CD4-positive, alpha-beta memory T cell (primary cell): ENCODE measurements at regions of chr7 and their contacts with region 1.

Region 1: GRCh38 chr7:151017953-151018420 is 6.3 kb downstream of the ATG9B start:
- DNase-seq: peak; percentile 72 to 81 (median 73)
- H3K4me3 ChIP-seq: peak overlapping the region; percentile 28 to 68
- H3K4me3 Mint-ChIP-seq: peak overlapping the region; percentile 81 to 94 (median 85)
- H3K27ac ChIP-seq: no peak overlapping the region
- H3K27ac Mint-ChIP-seq: peak overlapping the region; percentile 77 to 97 (median 93)
- H3K4me1 ChIP-seq: peaks cover 60% of the 10 kb centered on the region
- H3K4me1 Mint-ChIP-seq: peaks cover 38 to 65% (median 51%) of the 10 kb centered on the region in 4 donors
- H3K27me3 ChIP-seq: no peaks in the 10 kb centered on the region
- H3K27me3 Mint-ChIP-seq: peaks cover 1 to 9% of the 10 kb centered on the region in 2 donors

Region 2: DNA sequence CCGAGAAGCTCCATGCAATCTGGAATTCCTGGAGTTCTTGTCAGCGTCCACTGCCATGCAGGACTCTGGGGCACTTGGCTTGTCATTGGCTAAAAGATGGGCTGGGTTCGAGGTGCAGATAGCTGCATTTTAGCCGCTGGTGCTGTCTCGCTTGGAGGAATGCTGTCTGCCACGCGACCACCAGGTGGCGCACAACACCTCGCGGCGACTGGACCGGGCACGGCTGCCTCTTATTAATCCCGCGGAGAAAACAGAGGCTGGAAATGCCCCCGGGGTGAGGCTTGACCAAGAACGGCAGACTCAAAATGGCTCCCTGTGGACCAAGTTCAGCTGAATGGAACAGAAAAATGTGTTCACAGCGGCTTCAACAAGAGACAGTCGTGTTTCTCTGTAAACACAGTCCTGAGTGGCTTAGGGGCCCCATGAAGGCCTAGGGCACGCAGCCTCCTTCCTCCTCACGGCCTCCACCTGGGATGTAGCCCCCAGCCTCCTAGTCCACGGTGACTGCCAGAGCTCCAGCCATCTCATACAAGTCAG is 119.4 kb before region 1 on chr7:
- CTCF ChIA-PET with region 1: interaction called, 23 read pairs
- POLR2A ChIA-PET with region 1: interaction called, 3 read pairs
- intact Hi-C with region 1: loop called (anchors 1 kb)
- DNase-seq: peak; percentile 62 to 74 (median 65)
- H3K4me3 ChIP-seq: no peak overlapping the region
- H3K4me3 Mint-ChIP-seq: peak overlapping the region in 4 of 8 donors; percentile 1 to 40 (median 20)
- H3K27ac ChIP-seq: no peak overlapping the region
- H3K27ac Mint-ChIP-seq: peak overlapping the region in 2 of 7 donors; percentile 8 to 44
- H3K4me1 ChIP-seq: peaks cover 11% of the 10 kb centered on the region
- H3K4me1 Mint-ChIP-seq: peaks cover 3 to 8% (median 7%) of the 10 kb centered on the region in 4 donors
- H3K27me3 ChIP-seq: peaks cover 13% of the 10 kb centered on the region
- H3K27me3 Mint-ChIP-seq: peaks cover 23 to 38% of the 10 kb centered on the region in 2 donors

Region 3: GRCh38 chr7:150962553-150963399 is 55.2 kb before region 1 on chr7:
- CTCF ChIA-PET with region 1: interaction called, 66 read pairs
- POLR2A ChIA-PET with region 1: interaction called, 10 read pairs
- intact Hi-C with region 1: loop called (anchors 1 kb)
- DNase-seq: peak in 4 of 5 donors; percentile 58 to 63 (median 62)
- H3K4me3 ChIP-seq: no peak overlapping the region
- H3K4me3 Mint-ChIP-seq: no peak overlapping the region
- H3K27ac ChIP-seq: no peak overlapping the region
- H3K27ac Mint-ChIP-seq: no peak overlapping the region
- H3K4me1 ChIP-seq: peaks cover 21% of the 10 kb centered on the region
- H3K4me1 Mint-ChIP-seq: peaks cover 6 to 15% (median 9%) of the 10 kb centered on the region in 4 donors
- H3K27me3 ChIP-seq: no peaks in the 10 kb centered on the region
- H3K27me3 Mint-ChIP-seq: peaks cover 12 to 13% of the 10 kb centered on the region in 2 donors

Region 4: DNA sequence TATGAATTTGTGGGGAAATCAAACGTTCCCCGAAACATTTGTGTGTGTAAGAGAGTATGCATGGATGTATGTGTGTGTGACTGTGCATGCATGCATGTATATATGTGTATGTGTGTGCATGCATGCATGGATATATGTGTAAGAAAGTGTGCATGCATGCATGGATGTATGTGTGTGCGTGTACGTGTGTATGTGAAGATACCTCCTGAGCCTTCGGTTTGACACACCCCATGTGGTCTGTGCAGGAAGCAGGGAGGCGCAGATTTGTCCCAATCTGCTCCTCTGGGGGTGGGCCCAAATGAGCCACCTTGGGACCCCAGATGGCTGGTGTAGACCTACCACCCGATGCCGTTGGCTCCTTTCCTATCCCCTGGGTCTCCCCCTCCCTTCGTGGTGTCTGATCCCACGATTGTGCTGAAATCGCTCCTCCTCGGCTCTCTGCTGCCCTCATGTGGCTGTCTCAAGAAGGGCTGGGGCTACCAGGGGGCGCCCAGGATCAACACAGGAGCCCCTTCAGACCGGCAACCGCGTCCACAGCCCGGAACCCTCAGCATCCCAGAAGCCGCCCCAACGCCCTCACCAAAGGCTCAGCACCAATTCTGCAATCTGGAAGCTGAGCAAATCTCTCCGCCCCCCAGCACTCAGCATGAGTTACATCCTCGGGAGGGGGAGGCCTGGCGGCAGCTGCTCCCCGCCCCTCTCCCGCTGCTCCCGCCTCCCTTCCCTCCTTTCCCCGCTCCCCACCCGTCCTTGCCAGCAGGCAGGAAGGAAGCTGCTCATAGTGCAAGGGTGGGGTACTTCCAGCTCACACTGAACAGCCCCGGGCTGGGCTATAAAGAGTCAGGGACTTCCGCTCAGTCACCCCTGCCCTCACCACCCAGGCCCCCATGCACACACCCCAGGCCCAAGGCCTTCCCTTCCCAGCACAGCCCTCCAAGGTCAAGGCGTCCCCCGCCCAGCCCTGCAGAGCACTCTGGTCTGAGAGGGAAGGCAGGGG is 29.5 kb before region 1 on chr7:
- CTCF ChIA-PET with region 1: interaction called, 98 read pairs
- POLR2A ChIA-PET with region 1: interaction called, 12 read pairs
- intact Hi-C with region 1: loop called (anchors 1 kb)
- DNase-seq: peak; percentile 53 to 72 (median 70)
- H3K4me3 ChIP-seq: peak overlapping the region in 1 of 2 donors; percentile 47
- H3K4me3 Mint-ChIP-seq: peak overlapping the region; percentile 55 to 85 (median 75)
- H3K27ac ChIP-seq: no peak overlapping the region
- H3K27ac Mint-ChIP-seq: peak overlapping the region; percentile 23 to 95 (median 83)
- H3K4me1 ChIP-seq: peaks cover 35% of the 10 kb centered on the region
- H3K4me1 Mint-ChIP-seq: peaks cover 18 to 50% (median 31%) of the 10 kb centered on the region in 4 donors
- H3K27me3 ChIP-seq: no peaks in the 10 kb centered on the region
- H3K27me3 Mint-ChIP-seq: no peaks in the 10 kb centered on the region

Region 5: DNA sequence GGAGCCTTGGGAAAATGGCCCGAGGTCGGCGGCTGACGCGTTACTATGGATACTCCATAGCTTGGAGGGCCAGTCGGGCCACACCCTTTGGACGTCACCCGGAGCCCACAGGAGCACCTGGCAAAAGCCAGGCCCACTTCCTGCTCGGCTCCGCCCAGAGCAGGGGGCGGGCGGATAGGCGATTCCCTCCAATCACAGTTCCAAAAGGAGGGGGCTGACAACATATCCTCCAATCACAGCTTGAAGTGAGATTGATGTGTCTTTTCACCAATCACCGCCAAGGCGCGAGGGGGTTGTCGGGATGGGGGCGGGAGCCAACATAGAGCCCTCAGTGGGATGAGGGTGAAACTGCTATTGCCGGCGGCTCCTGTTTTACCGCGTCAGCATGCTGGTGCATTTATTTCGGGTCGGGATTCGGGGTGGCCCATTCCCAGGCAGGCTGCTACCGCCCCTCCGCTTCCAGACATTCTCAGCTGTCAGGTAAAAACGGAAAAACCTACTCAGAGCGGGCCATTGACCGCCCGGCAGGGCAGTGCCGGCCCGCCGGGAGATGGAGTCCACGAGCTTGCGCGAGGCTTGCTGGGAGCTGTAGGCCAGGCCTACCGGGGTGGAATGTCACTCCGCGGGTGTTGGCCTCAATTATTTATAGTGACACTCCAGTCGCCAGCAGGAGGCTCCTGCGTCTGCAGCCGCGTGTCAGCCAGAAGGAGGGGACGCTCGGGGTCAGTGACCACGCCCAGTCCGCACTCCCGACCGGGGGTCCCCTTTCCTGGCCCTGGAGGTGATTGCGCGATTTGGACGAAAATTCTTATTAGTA is 10.4 kb after region 1 on chr7 and contains the start of gene ABCB8:
- CTCF ChIA-PET with region 1: interaction called, 44 read pairs
- POLR2A ChIA-PET with region 1: interaction called, 182 read pairs
- intact Hi-C with region 1: loop called (anchors 1 kb)
- DNase-seq: peak; percentile 99 to 100 (median 99)
- H3K4me3 ChIP-seq: peak within 1 kb of the TSS; percentile 84 to 88
- H3K4me3 Mint-ChIP-seq: peak within 1 kb of the TSS; percentile 92 to 97 (median 95)
- H3K27ac ChIP-seq: peak within 1 kb of the TSS; percentile 88
- H3K27ac Mint-ChIP-seq: peak within 1 kb of the TSS; percentile 99 to 100 (median 99)
- H3K4me1 ChIP-seq: peaks cover 21% of the 10 kb centered on the region
- H3K4me1 Mint-ChIP-seq: peaks cover 13 to 28% (median 21%) of the 10 kb centered on the region in 4 donors
- H3K27me3 ChIP-seq: no peaks in the 10 kb centered on the region
- H3K27me3 Mint-ChIP-seq: no peaks in the 10 kb centered on the region
- total RNA-seq, gene ABCB8: 71.2 to 75.8 TPM

Region 6: DNA sequence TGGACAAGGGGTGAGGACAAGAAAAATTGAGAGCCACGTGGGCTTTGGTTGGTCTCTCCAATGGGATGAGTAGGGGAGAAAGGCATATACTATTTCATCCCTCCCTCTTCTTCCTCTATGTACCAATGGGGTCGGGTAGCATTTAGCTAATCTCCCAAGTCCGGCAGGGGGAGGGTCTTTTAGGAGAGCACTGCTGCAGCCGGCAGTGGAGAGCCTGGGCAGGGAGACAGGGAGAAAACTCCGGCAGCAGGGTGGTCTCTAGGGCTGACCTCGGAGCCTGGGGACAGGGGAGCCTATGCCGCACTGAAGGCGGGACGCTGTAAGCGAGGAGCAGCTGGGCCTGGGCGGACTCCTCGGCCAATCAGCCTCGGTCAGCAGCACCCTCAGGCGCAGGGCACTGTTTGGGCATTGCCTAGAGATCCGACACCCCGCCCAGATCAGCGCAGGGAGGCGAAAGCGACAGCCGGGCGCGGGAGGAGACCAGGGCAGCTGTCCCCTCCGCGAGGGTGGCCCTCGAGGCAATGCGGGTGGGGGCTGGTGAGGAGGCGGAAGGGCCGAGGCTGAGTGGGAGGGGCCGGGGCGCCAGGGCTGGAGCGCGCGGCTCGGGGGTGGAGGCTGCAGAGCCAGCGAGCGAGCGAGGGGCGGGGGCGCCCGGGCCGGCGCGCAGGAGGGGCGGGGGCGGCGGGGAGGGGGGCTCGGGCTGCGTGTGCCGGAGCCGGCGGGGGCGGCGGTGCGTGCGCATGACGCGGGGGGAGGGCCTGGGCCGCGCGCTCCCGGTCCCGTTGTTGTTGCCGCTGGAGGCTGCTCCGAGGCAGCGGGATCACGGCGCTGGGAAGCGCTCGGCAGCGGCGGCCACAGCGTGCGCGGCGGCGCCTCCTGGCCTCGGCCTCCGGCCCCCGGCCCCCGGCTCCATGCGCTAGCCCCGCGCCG is 68.0 kb after region 1 on chr7 and contains the start of gene AGAP3:
- CTCF ChIA-PET with region 1: interaction called, 10 read pairs
- POLR2A ChIA-PET with region 1: interaction called, 8 read pairs
- intact Hi-C with region 1: no loop called
- DNase-seq: peak; percentile 53 to 68 (median 57)
- H3K4me3 ChIP-seq: peak within 1 kb of the TSS; percentile 69 to 88
- H3K4me3 Mint-ChIP-seq: peak within 1 kb of the TSS; percentile 90 to 94 (median 91)
- H3K27ac ChIP-seq: peak within 1 kb of the TSS; percentile 62
- H3K27ac Mint-ChIP-seq: peak within 1 kb of the TSS; percentile 90 to 98 (median 93)
- H3K4me1 ChIP-seq: peaks cover 54% of the 10 kb centered on the region
- H3K4me1 Mint-ChIP-seq: peaks cover 22 to 57% (median 34%) of the 10 kb centered on the region in 4 donors
- H3K27me3 ChIP-seq: no peaks in the 10 kb centered on the region
- H3K27me3 Mint-ChIP-seq: no peaks in the 10 kb centered on the region
- total RNA-seq, gene AGAP3: 52.9 to 65.8 TPM

Region 7: DNA sequence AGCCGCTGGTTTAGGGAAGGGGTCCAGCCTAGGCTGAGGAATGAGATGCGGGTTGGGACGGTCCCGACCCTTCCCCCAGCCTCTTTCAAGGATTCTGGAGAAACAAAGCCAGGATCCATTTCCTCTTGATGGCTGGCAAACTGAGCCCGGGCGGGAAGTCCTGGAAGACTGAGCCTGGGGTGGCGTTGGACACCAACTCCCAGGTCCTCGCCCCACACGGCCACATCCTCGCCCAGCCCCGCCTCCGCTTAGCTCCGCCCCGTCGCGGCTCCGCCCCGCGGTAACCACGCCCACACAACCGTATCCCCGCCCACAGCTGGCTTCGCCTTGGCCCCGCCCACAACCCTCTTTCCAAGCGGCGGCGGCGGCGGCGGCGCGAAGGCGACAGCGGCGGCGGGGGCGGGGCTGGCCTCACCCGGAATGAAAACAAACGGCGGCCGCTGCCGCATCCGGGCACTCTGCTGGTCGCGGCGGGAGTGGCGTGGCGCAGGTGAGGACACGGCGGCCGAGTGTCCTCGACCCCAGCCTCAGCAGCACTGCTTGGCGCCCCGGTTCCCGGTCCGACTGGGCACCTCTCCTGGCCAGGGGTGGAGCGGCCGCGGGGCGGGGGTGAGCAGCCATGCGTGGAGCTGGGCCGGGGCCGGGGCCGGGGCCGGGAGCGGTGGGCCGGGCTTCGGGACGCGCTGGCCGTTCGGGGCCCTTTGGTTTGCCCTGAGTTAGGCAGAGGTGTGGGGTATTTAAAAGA is 323.5 kb after region 1 on chr7 and contains the start of gene NUB1:
- CTCF ChIA-PET with region 1: no interaction called
- POLR2A ChIA-PET with region 1: no interaction called
- intact Hi-C with region 1: loop called (anchors 10 kb)
- DNase-seq: peak; percentile 84 to 94 (median 88)
- H3K4me3 ChIP-seq: peak within 1 kb of the TSS; percentile 80 to 86
- H3K4me3 Mint-ChIP-seq: peak within 1 kb of the TSS; percentile 79 to 91 (median 89)
- H3K27ac ChIP-seq: peak within 1 kb of the TSS; percentile 81
- H3K27ac Mint-ChIP-seq: peak within 1 kb of the TSS; percentile 87 to 97 (median 93)
- H3K4me1 ChIP-seq: peaks cover 28% of the 10 kb centered on the region
- H3K4me1 Mint-ChIP-seq: peaks cover 19 to 42% (median 29%) of the 10 kb centered on the region in 4 donors
- H3K27me3 ChIP-seq: no peaks in the 10 kb centered on the region
- H3K27me3 Mint-ChIP-seq: no peaks in the 10 kb centered on the region
- total RNA-seq, gene NUB1: 116 to 119 TPM